Left ventricle myocardium superior (tissue), 1 donor: ENCODE measurements at regions of chr20 and their contacts with region 1.

Region 1: GRCh38 chr20:20192401-20193182 is 140.3 kb downstream of the CFAP61 start:
- DNase-seq: no peak
- ATAC-seq: no peak

Region 2: DNA sequence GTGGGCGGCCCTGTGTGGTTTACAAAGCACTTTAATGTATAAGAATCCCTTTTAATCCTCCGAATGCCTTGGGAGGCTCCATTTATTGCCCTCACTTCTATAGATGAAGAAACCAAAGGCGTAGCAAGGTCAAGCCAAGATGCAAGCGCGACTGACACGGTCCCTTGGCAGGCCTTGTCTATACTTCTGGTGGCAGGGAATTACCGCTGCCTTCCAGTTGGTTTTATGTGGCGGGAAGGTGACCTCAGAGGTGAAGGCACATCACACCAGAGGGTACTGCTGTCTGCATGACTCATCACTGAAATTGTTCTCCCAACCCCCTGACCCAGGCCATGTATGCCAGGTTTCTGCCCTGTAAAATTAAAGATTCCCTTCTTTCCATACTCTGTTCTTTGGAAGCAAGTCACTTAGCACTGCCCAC is 211.6 kb before region 1 on chr20:
- intact Hi-C with region 1: no loop called
- DNase-seq: no peak
- ATAC-seq: peak; percentile 20

Region 3: DNA sequence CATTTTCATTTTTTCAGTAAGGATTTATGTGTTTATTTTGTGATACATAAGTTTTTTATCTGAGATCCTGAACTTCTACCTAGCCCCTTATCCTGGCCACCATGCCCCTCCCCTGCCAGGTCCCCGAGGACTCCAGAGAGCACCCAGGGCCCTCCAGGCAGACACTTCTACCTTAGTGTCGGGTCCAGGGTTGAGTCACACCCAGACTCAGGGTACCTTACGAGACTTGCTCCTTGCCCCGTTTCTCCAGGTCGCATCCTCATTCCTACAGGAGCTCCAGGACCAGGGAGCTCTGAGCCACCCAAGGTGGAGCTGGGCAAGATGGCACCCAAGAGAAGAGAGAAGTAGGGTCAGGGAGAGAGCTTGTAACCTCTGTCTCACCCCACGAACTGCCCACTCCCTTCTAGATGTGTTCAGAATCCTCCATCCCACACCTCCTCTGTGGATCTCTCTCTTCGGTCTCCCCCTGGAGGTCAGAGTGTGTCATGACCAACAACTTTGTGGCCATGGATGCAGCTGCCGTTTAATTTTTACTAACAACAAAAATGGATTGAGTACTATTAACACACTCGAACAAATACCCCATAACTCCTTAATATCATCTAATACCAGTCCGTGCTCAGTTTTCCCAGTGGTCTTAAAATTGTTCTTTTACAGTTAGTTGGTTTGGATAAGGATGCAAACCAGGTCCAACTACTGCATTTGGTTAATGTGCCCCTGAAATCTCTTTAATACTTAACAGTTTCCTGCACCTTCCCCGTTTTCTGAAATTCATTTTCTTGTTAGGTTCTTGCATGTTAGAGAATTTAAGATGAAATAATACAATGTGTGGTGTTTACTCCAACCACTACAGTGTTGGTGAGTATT is 44.7 kb after region 1 on chr20:
- intact Hi-C with region 1: loop called (anchors 2 kb)
- DNase-seq: no peak
- ATAC-seq: peak; percentile 71